ENCODE measurements at regions of chr5 and their contacts with region 1.

Region 1: GRCh38 chr5:139422307-139422893 is 16.9 kb downstream of the DNAJC18 start:
- DNase-seq: no peak
- H3K4me3 ChIP-seq: no peak overlapping the region
- H3K27ac ChIP-seq: no peak overlapping the region
- H3K4me1 ChIP-seq: peaks cover 0 to 10% (median 8%) of the 10 kb centered on the region in 4 donors
- H3K27me3 ChIP-seq: no peaks in the 10 kb centered on the region
- CTCF ChIP-seq: peak; percentile 59 to 82 (median 68)
- EP300 ChIP-seq: no peak
- POLR2A ChIP-seq: no peak

Region 2: GRCh38 chr5:138632900-138633489 is 789.4 kb before region 1 on chr5:
- intact Hi-C with region 1: no loop called
- DNase-seq: peak; percentile 80
- H3K4me3 ChIP-seq: no peak overlapping the region
- H3K27ac ChIP-seq: no peak overlapping the region
- H3K4me1 ChIP-seq: peaks cover 0 to 26% (median 19%) of the 10 kb centered on the region in 4 donors
- H3K27me3 ChIP-seq: no peaks in the 10 kb centered on the region
- CTCF ChIP-seq: peak in 1 of 4 experiments; percentile 19
- EP300 ChIP-seq: no peak
- POLR2A ChIP-seq: no peak

Region 3: DNA sequence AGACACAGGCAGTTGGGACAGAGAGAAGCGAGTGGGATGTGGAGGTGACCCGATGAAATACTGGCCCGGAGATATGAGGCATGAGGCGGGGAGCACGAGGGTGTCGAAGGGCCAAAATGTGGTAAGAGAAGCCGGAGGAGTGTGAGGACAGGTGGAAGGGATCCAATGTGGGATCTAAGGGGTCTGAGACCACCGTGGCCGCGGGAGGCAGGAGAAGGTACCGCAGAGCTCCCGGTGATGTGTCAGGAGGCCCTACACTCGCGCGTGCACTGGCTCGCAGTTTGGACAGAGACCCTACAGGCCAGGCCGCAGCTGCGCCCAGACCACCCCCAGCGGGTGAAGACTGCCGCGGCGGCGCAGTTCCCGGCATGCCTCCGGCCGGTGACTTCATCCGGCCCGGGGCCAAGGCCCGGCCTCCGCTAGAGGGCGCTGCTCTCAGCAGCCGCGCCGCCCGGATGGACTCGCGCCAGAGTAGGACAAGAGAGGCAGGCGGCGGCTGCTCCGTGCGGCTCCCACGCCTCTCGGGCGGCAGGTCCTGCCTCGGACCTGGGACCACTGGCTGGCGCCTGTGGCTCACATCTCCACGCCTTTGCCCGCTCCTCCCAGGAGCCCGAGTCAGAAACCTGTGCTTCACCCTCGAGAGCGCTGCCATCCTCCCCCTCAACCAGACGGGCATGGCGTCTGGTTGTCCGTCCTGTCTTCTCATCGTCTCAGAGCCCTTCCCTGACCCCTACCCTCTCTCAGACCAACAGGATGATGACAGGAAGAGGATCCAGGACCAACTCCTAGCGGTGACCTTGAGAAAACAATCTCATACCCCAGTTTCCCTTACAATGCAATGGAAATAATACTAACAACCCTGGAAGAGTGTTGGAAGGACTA is 95.5 kb after region 1 on chr5:
- intact Hi-C with region 1: loop called (anchors 1 kb)
- DNase-seq: peak; percentile 95
- H3K4me3 ChIP-seq: peak overlapping the region; percentile 26 to 56 (median 54)
- H3K27ac ChIP-seq: peak overlapping the region; percentile 72 to 81 (median 79)
- H3K4me1 ChIP-seq: peaks cover 0 to 4% (median 3%) of the 10 kb centered on the region in 4 donors
- H3K27me3 ChIP-seq: no peaks in the 10 kb centered on the region
- CTCF ChIP-seq: peak; percentile 88 to 98 (median 94)
- EP300 ChIP-seq: peak in 1 of 4 donors; percentile 48
- POLR2A ChIP-seq: no peak

Region 4: DNA sequence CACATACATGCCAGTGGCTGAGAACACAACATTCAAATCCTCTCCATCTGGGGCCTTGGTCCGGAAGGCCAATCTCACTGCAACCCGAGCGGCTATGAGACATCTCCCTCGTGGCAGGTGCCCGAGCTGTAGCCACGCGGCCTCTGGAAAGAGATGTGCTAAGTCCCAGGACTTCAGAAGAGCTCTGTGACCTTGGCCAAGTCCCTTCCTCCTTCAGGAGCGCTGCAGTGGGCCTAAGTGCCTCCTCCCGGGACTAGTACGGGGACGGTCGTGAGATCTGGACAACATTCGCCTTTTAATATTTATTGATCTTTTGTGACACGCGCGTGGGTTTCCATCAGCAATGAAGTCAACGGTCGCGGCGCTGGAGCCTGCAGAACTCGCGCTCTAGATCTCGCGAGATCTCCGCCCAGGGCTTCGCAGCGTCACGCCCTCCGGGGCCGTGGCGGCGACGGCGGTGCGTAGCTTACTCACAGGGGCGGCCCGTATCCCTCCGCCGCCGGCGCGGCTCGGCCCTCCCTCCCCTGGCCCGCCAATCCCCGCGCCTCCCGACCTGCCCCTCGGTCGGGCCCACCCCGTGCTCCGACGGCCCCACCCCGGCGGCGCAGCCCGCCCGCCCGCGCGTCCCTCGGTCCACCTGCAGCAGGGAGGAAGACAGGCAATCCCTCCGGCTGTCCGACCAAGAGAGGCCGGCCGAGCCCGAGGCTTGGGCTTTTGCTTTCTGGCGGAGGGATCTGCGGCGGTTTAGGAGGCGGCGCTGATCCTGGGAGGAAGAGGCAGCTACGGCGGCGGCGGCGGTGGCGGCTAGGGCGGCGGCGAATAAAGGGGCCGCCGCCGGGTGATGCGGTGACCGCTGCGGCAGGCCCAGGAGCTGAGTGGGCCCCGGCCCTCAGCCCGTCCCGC is 138.6 kb after region 1 on chr5 and contains the start of gene UBE2D2:
- intact Hi-C with region 1: loop called (anchors 5 kb)
- DNase-seq: peak; percentile 99
- H3K4me3 ChIP-seq: peak within 1 kb of the TSS; percentile 81 to 93 (median 90)
- H3K27ac ChIP-seq: peak within 1 kb of the TSS; percentile 94 to 97 (median 96)
- H3K4me1 ChIP-seq: peaks cover 0 to 48% (median 41%) of the 10 kb centered on the region in 4 donors
- H3K27me3 ChIP-seq: no peaks in the 10 kb centered on the region
- CTCF ChIP-seq: no peak
- EP300 ChIP-seq: no peak
- POLR2A ChIP-seq: peak; percentile 62 to 72
- total RNA-seq, gene UBE2D2: 61.5 to 93.0 (median 69.7) TPM

Region 5: DNA sequence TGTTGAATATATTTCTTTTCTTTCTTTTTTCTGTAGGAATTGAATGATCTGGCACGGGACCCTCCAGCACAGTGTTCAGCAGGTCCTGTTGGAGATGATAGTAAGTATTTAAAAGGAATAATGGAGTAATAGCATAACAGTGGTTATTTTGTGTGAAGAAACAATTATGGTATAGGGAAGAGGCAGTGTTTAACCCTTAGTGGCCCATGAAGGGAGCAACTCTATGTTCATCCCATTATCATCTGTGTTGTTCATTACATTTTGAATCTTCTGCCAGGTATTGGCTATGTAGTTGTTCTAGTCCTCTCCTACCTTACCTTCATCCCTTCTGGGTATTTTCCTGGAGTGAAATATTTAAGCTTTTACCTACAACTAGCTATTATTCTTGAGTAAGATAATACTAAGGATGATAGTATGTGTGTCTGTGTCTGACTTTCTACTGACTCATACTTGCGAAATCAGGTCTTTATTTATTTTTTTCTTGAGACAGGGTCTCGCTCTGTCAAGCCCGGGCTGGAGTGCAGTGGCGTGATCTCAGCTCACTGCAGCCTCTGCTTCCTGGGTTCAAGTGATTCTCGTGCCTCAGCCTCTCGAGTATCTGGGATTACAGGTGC is 178.0 kb after region 1 on chr5:
- intact Hi-C with region 1: loop called (anchors 10 kb)
- DNase-seq: no peak
- H3K4me3 ChIP-seq: no peak overlapping the region
- H3K27ac ChIP-seq: no peak overlapping the region
- H3K4me1 ChIP-seq: peaks cover 0 to 16% (median 7%) of the 10 kb centered on the region in 4 donors
- H3K27me3 ChIP-seq: no peaks in the 10 kb centered on the region
- CTCF ChIP-seq: no peak
- EP300 ChIP-seq: no peak
- POLR2A ChIP-seq: no peak

Region 6: GRCh38 chr5:139765409-139766217 is 343.2 kb after region 1 on chr5:
- intact Hi-C with region 1: loop called (anchors 5 kb)
- DNase-seq: peak; percentile 81
- H3K4me3 ChIP-seq: peak overlapping the region; percentile 24 to 57 (median 49)
- H3K27ac ChIP-seq: peak overlapping the region in 1 of 4 donors; percentile 38
- H3K4me1 ChIP-seq: peaks cover 0 to 18% (median 3%) of the 10 kb centered on the region in 4 donors
- H3K27me3 ChIP-seq: peaks cover 12 to 26% (median 21%) of the 10 kb centered on the region in 3 donors
- CTCF ChIP-seq: peak; percentile 99 to 100 (median 99)
- EP300 ChIP-seq: no peak
- POLR2A ChIP-seq: no peak